HAP-1 (cell line): ENCODE measurements at regions of chr5 and their contacts with region 1.

Region 1: DNA sequence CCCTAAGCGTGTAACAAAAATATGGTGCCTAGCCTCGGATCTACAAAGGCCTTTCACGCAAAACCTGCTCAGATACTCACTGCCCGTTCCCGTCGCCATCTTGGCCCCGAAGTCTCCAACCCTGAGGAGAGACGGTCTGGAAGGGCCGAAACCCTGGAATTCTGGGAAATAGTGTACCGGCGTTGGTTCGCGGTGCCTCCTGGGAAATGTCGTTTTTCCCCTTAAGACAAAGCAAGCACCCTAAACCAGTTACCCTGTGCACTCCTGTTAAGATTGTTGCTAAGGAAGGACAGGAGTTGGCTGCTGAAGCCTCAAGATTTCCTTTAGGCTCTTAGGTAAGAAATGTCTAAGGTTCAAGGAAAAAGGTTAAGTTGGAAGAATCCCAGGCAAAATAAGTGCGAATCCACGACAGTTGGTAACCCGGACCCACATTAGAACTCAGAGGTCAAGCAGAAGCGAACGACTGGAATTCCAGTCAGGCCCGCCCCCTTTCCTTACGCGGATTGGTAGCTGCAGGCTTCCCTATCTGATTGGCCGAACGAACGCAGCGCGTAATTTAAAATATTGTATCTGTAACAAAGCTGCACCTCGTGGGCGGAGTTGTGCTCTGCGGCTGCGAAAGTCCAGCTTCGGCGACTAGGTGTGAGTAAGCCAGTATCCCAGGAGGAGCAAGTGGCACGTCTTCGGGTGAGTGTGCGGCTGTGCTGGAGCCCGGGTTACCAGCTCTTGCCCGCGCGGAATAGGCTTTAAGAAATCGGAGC is at the starts of genes BRD8 and KIF20A:
- DNase-seq: peak; percentile 98
- H3K4me3 ChIP-seq: peak within 1 kb of the TSS; percentile 67
- H3K4me1 ChIP-seq: peaks cover 10% of the 10 kb centered on the region
- H3K27me3 ChIP-seq: no peaks in the 10 kb centered on the region

Region 2: GRCh38 chr5:138503487-138504270 is 325.0 kb after region 1 on chr5:
- in situ Hi-C with region 1: loop called (anchors 25 kb)
- DNase-seq: peak; percentile 53 to 73
- H3K4me3 ChIP-seq: no peak overlapping the region
- H3K4me1 ChIP-seq: no peaks in the 10 kb centered on the region
- H3K27me3 ChIP-seq: no peaks in the 10 kb centered on the region

Region 3: DNA sequence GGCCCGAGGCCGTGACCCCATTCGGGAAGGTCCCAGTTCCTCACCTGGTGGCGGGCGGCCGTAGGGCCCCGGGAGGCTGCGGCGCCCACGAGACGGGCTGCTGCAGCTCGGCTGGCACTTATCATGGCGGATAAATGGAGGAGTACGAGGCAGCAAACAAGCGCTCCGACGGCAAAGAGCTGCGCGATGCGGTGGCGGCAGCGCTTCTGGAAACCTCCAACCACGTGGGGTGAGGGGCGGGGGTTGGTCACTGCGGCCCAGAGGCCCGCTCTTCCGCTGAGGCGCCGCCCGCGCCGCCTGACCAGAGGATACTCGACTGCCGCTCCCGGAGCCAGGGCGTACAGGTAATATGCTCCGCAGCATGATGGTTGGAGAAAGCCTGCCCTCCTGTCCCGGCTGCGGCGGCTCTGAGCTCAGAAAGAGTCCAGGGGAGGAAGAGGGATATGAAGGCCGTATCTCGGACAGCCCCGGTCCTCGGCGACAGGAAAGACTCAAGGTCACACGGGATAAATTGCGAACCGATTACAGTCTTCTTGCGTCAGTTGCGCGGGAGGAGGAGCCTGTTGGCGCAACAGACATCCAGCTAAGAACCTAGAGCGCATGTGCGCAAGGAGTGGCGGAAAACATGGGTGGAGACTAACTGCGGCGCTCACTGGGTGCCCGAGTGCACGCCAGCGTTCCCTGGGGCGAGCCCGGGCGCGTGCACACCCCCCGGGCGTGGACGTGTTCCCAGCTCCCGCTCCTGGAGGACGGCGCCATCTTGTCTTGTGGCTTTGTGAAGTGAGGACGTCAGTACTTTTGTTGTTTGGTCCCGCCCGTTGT is 396.7 kb after region 1 on chr5 and contains the start of gene HSPA9:
- in situ Hi-C with region 1: no loop called
- DNase-seq: peak; percentile 98 to 99
- H3K4me3 ChIP-seq: peak within 1 kb of the TSS; percentile 94
- H3K4me1 ChIP-seq: peaks cover 10% of the 10 kb centered on the region
- H3K27me3 ChIP-seq: no peaks in the 10 kb centered on the region

Region 4: DNA sequence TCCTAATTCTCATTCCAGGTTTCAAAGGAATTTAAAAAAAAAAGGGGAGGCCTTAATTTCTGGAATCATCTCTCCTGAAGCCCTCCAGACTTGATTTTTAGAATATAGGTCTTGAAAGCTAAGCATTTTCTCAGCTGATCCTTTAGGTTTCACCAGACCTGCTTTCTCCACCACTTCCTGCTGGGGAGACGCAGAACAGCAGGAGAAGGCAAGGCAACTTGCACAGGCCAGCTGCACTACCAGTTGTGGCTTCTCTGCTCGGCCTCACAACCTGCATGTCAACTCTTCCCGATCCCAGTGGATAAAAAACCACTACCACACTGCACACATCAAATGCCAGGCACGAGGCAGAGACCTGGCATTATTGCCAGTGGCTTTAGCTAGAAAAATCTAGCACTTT is 899.6 kb after region 1 on chr5:
- in situ Hi-C with region 1: no loop called
- DNase-seq: no peak
- H3K4me3 ChIP-seq: no peak overlapping the region
- H3K4me1 ChIP-seq: no peaks in the 10 kb centered on the region; the same call in 1 of the 2 replicates
- H3K27me3 ChIP-seq: no peaks in the 10 kb centered on the region

Region 5: DNA sequence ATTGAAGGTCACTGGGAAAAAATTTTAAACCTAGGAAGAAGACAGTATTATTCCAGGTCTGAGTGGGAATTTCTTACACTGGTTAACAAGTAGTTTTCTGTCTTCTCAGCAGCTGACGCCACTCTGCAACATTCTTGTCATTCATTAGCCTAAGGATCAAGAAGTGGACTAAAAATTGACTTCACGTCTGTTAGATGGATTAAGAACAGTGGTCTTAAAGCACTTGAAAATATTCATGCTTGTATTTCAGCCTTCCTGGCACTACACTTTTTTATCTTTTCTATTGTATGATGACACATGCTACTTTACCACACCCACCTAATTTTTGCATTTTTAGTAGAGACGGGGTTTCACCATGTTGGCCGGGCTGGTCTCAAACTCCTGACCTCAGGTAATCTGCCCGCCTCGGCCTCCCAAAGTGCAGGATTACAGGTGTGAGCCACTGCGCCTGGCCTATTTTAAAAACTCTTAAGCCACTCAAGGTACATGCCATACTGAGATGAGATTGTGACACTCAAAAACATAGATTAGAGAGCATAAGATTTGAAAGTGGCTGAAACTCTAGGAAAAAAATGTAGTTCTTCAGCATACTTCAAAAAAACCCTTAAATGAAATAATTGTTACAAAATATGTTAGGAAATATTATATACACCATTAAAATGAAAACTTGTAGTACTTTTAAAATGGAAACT is 1123.3 kb after region 1 on chr5:
- in situ Hi-C with region 1: loop called (anchors 25 kb)
- DNase-seq: no peak
- H3K4me3 ChIP-seq: no peak overlapping the region
- H3K4me1 ChIP-seq: peaks cover 40% of the 10 kb centered on the region
- H3K27me3 ChIP-seq: no peaks in the 10 kb centered on the region